ENCODE measurements at regions of chr6 and their contacts with region 1.

Region 1: GRCh38 chr6:150891888-150892485 is 26.5 kb downstream of the MTHFD1L start:
- DNase-seq: peak; percentile 14 to 73
- ATAC-seq: peak; percentile 76 to 82
- H3K4me3 ChIP-seq: no peak overlapping the region
- H3K27ac ChIP-seq: peak overlapping the region; percentile 29 to 64; a peak in 4 of 6 replicates
- H3K4me1 ChIP-seq: peaks cover 17% of the 10 kb centered on the region
- CTCF ChIP-seq: peak; percentile 71
- EP300 ChIP-seq: no peak
- POLR2A ChIP-seq: no peak
- RAD21 ChIP-seq: peak; percentile 81

Region 2: GRCh38 chr6:150813319-150813992 is 78.5 kb before region 1 on chr6:
- CTCF ChIA-PET with region 1: interaction called, 19 read pairs
- POLR2A ChIA-PET with region 1: no interaction called
- DNase-seq: peak in 1 of 2 experiments; percentile 5
- ATAC-seq: peak in 1 of 2 experiments; percentile 26; a peak in 2 of 6 replicates
- H3K4me3 ChIP-seq: no peak overlapping the region
- H3K27ac ChIP-seq: peak overlapping the region; percentile 71 to 81
- H3K4me1 ChIP-seq: peaks cover 21% of the 10 kb centered on the region
- CTCF ChIP-seq: no peak
- EP300 ChIP-seq: no peak
- POLR2A ChIP-seq: no peak
- RAD21 ChIP-seq: no peak

Region 3: DNA sequence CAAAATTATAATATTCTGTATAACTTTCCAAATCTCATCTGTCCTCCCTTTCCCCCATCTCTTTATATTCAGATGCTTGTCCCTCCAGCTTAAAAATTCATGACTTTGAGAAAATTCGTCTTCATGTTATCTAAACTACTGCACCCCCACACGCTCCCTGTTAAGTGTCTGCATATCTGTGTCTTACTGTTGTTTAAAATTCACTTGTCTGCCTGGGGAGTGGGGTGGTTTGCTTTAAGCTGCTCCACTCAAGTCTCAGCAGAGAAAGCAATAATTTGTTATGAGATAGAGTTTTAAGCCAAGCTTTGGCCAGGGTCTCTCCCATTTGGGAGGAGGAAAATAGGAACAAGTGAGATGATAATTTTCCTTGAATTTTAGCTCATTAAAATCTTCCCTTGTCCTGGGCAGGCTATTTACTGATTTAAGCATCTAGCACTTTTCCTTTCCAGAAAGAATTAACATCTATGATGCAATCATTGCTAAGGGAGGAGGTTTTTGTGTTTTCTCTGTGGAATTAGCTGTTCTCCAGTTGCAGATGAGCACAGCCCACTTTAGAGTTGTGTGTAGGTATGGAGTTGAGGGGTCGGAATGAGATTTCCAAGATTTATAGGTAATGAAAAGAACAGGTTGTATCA is 10.3 kb after region 1 on chr6:
- CTCF ChIA-PET with region 1: interaction called, 26 read pairs
- POLR2A ChIA-PET with region 1: no interaction called
- DNase-seq: no peak
- ATAC-seq: no peak
- H3K4me3 ChIP-seq: no peak overlapping the region
- H3K27ac ChIP-seq: peak overlapping the region in 1 of 2 experiments; percentile 28; a peak in 1 of 6 replicates
- H3K4me1 ChIP-seq: peaks cover 18% of the 10 kb centered on the region
- CTCF ChIP-seq: no peak
- EP300 ChIP-seq: no peak
- POLR2A ChIP-seq: no peak
- RAD21 ChIP-seq: no peak

Region 4: DNA sequence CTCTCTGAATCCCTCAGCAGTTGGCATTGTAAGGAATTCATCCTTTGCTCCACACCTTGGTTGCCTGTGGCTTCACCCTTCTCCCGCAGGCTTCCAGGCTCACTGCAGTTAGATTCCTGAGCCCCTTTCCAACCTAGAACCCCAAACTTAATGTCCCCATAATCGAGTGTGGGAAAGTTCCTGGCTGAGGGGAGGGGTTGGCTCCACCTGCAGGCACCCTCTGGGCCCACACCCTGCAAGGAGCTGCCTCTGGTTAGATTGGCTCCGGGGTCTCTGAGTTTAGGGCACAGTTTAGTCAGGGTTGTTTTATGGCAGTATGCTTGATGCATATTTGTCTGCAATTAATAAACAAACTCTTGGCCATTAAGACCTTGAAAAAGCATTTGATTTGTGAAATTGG is 36.9 kb after region 1 on chr6:
- CTCF ChIA-PET with region 1: interaction called, 12 read pairs
- POLR2A ChIA-PET with region 1: no interaction called
- DNase-seq: peak in 1 of 2 experiments; percentile 7
- ATAC-seq: peak; percentile 78 to 82; a peak in 5 of 6 replicates
- H3K4me3 ChIP-seq: no peak overlapping the region
- H3K27ac ChIP-seq: peak overlapping the region; percentile 17 to 58; a peak in 4 of 6 replicates
- H3K4me1 ChIP-seq: peaks cover 63% of the 10 kb centered on the region
- CTCF ChIP-seq: no peak; the same call in 2 of the 3 replicates
- EP300 ChIP-seq: no peak
- POLR2A ChIP-seq: no peak
- RAD21 ChIP-seq: no peak

Region 5: GRCh38 chr6:151335930-151336329 is 443.9 kb after region 1 on chr6:
- CTCF ChIA-PET with region 1: interaction called, 25 read pairs
- POLR2A ChIA-PET with region 1: interaction called, 9 read pairs
- DNase-seq: no peak
- ATAC-seq: no peak
- H3K4me3 ChIP-seq: no peak overlapping the region
- H3K27ac ChIP-seq: no peak overlapping the region
- H3K4me1 ChIP-seq: 0 out of 3 replicates have a peak, but pooled peaks cover 3% of the 10 kb centered on the region
- CTCF ChIP-seq: no peak
- EP300 ChIP-seq: no peak
- POLR2A ChIP-seq: no peak
- RAD21 ChIP-seq: no peak

Measured in A549 (cell line).